Caco-2 (cell line): ENCODE measurements at regions of chr10 and their contacts with region 1.

Region 1: DNA sequence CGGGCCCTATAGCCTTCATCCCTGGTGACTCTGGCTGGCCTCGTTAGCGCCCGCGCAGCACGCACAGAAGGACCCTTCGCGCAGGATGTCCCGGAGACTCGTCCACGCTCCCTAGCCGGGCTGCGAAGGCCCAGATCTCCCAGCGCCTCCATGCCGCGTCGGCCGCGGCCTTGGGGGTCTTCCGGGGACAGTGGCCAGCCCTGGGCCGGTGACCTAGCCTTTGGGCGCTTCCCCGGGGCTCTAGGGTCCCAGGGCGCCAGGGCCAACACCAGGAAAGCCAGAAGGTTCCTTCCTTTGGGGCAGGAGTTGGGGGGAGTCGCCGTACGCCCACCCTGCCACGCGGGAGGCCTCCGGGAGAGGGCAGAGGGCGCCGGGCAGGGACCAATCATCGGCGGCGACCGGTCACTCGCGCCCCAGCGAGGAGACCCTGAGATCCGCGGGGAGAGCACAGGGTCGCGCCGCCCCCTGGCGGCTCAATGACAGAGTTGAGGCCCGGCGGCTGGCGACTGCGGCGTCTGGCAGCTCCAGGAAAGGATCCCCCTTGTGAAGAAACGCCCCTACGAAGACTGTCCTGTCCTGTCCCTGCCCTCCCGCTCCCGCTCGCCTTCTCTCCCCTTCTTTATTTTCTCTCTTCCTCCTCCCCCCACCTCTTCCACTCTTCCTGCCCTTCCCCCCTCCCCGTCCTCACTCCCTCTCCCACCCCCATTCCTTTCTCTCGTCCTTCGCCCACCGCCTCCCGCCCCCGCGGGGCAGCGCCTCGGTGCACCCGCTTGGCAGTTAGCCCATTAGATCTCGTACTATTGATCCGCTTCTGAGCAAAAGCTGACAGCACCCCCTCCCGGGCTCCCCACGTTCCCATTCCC is 62.3 kb upstream of the LBX1 start:
- DNase-seq: peak; percentile 67 to 73
- H3K4me3 ChIP-seq: peak overlapping the region; percentile 45
- H3K4me3 Mint-ChIP-seq: peak overlapping the region; percentile 69
- H3K27ac Mint-ChIP-seq: no peak overlapping the region
- H3K4me1 ChIP-seq: peaks cover 4% of the 10 kb centered on the region; the same call in 1 of the 2 replicates
- H3K4me1 Mint-ChIP-seq: no peaks in the 10 kb centered on the region
- H3K27me3 ChIP-seq: peaks cover 5% of the 10 kb centered on the region
- H3K27me3 Mint-ChIP-seq: peaks cover 22% of the 10 kb centered on the region
- CTCF ChIP-seq: peak; percentile 85 to 92

Region 2: DNA sequence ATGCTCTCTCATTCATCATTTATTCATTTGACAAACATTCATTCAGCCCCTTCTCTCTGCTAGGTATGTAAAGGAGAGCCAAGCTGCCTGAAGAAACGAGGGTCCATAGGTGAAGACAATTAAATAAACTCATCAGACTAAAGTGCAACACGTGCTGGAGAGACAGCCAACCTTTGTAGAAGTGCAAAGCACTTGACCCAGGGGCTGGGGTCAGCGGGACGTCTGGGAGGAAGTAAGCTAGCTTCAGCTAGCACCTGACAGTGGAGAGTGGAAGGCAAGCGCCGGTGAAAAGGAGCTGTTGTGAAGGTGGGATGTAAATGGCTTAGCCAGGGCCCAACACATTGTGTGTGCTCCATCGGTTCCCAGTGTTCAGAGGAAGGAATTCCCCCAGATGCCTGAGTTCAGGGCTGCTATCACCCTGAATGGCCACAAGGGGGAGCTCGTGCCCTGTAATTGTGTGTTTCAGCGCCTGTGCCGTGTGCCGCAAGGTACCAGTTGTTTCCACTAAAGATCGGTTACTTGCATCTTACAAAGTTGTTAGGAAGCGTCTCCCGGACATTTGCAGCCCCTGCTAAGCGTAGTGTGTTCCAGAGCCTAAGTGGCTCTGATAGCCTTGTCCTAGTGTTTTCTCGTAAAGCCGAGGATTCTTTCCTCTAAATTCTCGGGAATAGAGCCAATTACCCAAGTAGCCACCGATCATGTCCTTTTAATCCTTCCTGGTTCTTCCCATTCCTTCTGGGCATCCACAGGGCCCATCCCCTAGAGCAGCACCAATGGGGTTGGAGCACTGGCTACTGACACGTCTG is 129.9 kb before region 1 on chr10:
- CTCF ChIA-PET with region 1: interaction called, 10 read pairs
- POLR2A ChIA-PET with region 1: no interaction called
- intact Hi-C with region 1: loop called (anchors 1 kb)
- DNase-seq: peak; percentile 63 to 79
- H3K4me3 ChIP-seq: no peak overlapping the region
- H3K4me3 Mint-ChIP-seq: no peak overlapping the region
- H3K27ac Mint-ChIP-seq: no peak overlapping the region
- H3K4me1 ChIP-seq: peaks cover 13% of the 10 kb centered on the region
- H3K4me1 Mint-ChIP-seq: peaks cover 7% of the 10 kb centered on the region
- H3K27me3 ChIP-seq: no peaks in the 10 kb centered on the region; the same call in 1 of the 2 replicates
- H3K27me3 Mint-ChIP-seq: peaks cover 13% of the 10 kb centered on the region
- CTCF ChIP-seq: peak; percentile 96 to 97

Region 3: GRCh38 chr10:101272229-101272868 is 19.2 kb before region 1 on chr10:
- CTCF ChIA-PET with region 1: interaction called, 8 read pairs
- POLR2A ChIA-PET with region 1: no interaction called
- intact Hi-C with region 1: loop called (anchors 2 kb)
- DNase-seq: peak; percentile 68 to 76
- H3K4me3 ChIP-seq: no peak overlapping the region
- H3K4me3 Mint-ChIP-seq: no peak overlapping the region
- H3K27ac Mint-ChIP-seq: no peak overlapping the region
- H3K4me1 ChIP-seq: no peaks in the 10 kb centered on the region
- H3K4me1 Mint-ChIP-seq: peaks cover 6% of the 10 kb centered on the region
- H3K27me3 ChIP-seq: no peaks in the 10 kb centered on the region; the same call in 1 of the 2 replicates
- H3K27me3 Mint-ChIP-seq: peaks cover 11% of the 10 kb centered on the region
- CTCF ChIP-seq: peak; percentile 77 to 78